Heart right ventricle (tissue), 16 donors: ENCODE measurements at regions of chr12 and their contacts with region 1.

Region 1: DNA sequence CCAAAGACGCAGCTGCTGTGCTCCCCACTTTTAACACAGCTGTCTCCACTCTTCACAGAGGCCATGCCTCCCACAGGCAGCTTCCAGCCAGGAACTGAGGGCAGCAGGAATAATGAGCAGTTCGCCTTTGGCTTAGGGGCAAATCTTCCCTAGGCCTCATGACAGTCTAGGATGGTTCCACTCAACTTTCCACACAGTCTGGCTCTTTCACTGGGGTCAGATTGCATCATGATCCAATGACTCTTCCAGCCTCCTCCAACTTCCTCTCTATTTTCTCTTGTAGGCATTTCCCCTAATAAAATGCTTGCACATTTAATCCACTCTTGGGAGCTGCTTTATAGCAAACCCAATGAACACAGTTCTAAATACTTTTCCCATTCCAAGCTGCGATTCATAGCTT is 271.6 kb upstream of the ATP2B1 start:
- DNase-seq: peak in 1 of 2 donors; percentile 13
- ATAC-seq: peak in 7 of 8 donors; percentile 47 to 89 (median 71)
- H3K4me3 ChIP-seq: no peak overlapping the region
- H3K27ac ChIP-seq: peak overlapping the region in 2 of 10 donors; percentile 24 to 69
- H3K4me1 ChIP-seq: peaks cover 0 to 15% (median 0%) of the 10 kb centered on the region in 9 donors
- H3K27me3 ChIP-seq: peaks cover 0 to 3% (median 0%) of the 10 kb centered on the region in 7 donors
- CTCF ChIP-seq: no peak

Region 2: GRCh38 chr12:91355150-91356006 is 1375.1 kb after region 1 on chr12:
- intact Hi-C with region 1: loop called in 1 of 10 experiments (anchors 5 kb)
- DNase-seq: peak; percentile 37 to 62
- ATAC-seq: peak; percentile 82 to 92 (median 88)
- H3K4me3 ChIP-seq: no peak overlapping the region
- H3K27ac ChIP-seq: no peak overlapping the region
- H3K4me1 ChIP-seq: no peaks in the 10 kb centered on the region
- H3K27me3 ChIP-seq: no peaks in the 10 kb centered on the region
- CTCF ChIP-seq: peak; percentile 53 to 87 (median 77)